GM12878 (cell line): ENCODE measurements at regions of chr17 and their contacts with region 1.

Region 1: DNA sequence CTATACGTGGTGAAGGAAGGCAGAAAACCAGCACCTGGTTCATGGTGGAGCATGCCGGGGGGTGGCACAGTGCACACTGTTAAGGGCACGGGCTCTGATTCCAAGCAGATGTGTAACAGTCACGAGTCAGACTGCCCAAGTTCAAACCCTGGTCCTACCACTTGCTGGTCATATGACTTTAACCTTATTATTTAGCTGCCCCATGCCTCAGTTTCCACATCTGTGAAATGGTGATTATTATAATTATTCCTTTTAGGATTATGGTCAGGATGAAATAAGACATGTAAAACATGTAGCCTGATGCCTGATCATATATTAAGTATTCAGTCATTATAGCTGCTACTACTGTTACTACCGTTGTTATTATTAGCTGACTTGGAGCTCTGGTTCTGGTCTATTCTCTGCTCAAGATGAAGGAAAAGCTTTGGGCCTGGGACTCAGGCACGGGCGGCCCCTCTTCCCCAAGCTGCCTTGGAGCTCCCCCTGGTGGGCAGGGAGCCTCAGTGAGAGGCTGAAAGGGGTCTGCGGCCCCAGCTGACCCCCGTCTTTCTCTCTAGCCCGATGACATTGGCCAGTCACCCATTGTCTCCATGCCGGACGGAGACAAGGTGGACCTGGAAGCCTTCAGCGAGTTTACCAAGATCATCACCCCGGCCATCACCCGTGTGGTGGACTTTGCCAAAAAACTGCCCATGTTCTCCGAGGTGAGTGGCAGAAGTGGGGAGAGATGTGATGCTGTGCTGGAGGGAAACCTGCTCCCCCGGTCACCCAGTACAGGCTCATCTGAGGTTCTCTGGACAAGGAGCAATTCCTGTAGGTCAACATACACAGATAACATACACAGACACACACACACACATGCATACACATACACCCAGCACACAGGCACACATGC is 14.0 kb downstream of the NR1D1 start:
- DNase-seq: no peak
- ATAC-seq: peak; percentile 92
- H3K4me3 ChIP-seq: no peak overlapping the region
- H3K27ac ChIP-seq: no peak overlapping the region
- H3K4me1 ChIP-seq: no peaks in the 10 kb centered on the region
- H3K27me3 ChIP-seq: no peaks in the 10 kb centered on the region
- CTCF ChIP-seq: peak; percentile 79 to 89 (median 80)
- EP300 ChIP-seq: no peak
- POLR2A ChIP-seq: no peak
- RAD21 ChIP-seq: peak; percentile 78

Region 2: GRCh38 chr17:40021451-40021971 is 64.9 kb before region 1 on chr17:
- CTCF ChIA-PET with region 1: interaction called, 44 read pairs
- POLR2A ChIA-PET with region 1: no interaction called
- RAD21 ChIA-PET with region 1: no interaction called
- SMC1A ChIA-PET with region 1: interaction called, 4 read pairs
- in situ Hi-C with region 1: no loop called
- intact Hi-C with region 1: no loop called
- DNase-seq: no peak
- ATAC-seq: no peak
- H3K4me3 ChIP-seq: no peak overlapping the region
- H3K27ac ChIP-seq: no peak overlapping the region
- H3K4me1 ChIP-seq: no peaks in the 10 kb centered on the region
- H3K27me3 ChIP-seq: no peaks in the 10 kb centered on the region
- CTCF ChIP-seq: no peak
- EP300 ChIP-seq: no peak
- POLR2A ChIP-seq: no peak
- RAD21 ChIP-seq: no peak

Region 3: DNA sequence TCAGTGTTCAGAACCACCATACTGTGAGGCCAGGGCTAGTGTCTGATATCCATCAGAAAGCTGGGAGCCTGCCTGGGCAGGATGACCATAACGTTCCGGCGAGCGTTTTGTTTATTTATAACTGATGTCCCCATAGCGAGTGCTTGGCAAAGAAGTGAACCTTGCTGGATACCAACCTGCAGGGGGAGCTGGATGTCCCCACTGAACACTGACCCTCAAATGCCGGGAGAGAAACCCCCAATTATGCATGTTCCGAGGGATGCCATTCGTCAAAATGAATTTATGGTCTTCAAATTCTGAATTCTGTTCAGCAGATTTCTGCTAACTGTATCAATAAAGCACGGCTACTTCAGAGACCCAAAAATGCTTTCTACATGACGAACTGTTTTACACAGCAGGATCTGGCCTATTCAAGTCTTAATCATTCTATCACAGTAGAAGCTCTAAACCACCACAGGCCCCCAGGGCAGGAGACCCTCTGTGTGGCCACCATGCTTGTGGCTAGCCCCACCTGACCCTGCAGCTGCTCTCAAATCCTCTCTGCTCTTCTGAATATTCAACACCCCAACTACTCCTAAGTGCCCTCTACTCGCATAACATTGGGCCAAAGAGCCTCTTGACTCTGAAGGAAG is 47.4 kb before region 1 on chr17:
- CTCF ChIA-PET with region 1: interaction called, 18 read pairs
- POLR2A ChIA-PET with region 1: no interaction called
- RAD21 ChIA-PET with region 1: interaction called, 3 read pairs
- SMC1A ChIA-PET with region 1: interaction called, 7 read pairs
- in situ Hi-C with region 1: no loop called
- intact Hi-C with region 1: no loop called
- DNase-seq: no peak
- ATAC-seq: no peak
- H3K4me3 ChIP-seq: no peak overlapping the region
- H3K27ac ChIP-seq: no peak overlapping the region
- H3K4me1 ChIP-seq: no peaks in the 10 kb centered on the region
- H3K27me3 ChIP-seq: no peaks in the 10 kb centered on the region
- CTCF ChIP-seq: peak; percentile 18 to 35 (median 27); a peak in 3 of 6 replicates
- EP300 ChIP-seq: no peak
- POLR2A ChIP-seq: no peak
- RAD21 ChIP-seq: 0 out of 2 replicates have a peak, but pooled peaks have one; percentile 21

Region 4: DNA sequence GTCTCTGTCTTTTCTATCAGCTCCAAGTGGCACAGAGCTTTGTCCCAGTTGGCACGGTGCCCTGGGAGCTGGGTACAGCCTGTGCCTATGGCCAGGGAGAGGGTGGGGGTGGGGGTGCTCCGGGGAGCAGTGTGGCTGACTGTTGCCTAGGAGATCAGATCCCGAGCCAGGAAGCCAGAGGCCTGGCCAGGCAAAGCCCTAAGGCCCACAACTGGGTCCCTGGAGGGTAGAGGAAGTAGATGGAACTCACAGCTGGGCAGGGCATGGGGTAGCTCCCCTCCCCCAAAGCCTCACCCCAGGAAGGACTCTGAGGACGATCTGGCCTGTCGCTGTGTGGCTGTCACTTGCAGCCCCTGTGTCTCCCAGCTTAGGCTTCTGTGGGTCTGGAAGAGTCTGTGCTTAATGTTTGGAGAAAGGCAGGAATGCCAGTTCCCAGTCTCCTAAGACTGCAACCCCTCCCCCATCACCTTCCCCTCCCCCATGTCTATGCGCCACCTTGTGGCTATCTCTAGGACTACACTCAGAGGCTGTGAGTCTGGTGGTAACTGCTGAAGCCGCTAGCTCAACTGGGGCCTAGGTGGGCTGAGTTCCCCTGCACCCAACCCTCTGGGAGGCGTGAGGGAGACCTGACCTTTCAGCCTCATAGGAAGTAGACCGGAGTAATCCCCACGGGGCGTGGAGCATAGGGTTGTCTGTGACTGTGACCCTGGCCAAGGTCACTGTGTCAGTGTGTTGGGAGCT is 11.0 kb before region 1 on chr17:
- CTCF ChIA-PET with region 1: interaction called, 75 read pairs
- POLR2A ChIA-PET with region 1: interaction called, 6 read pairs
- RAD21 ChIA-PET with region 1: interaction called, 4 read pairs
- SMC1A ChIA-PET with region 1: interaction called, 12 read pairs
- in situ Hi-C with region 1: no loop called
- intact Hi-C with region 1: no loop called
- DNase-seq: no peak
- ATAC-seq: peak; percentile 89
- H3K4me3 ChIP-seq: no peak overlapping the region
- H3K27ac ChIP-seq: no peak overlapping the region
- H3K4me1 ChIP-seq: peaks cover 6% of the 10 kb centered on the region
- H3K27me3 ChIP-seq: no peaks in the 10 kb centered on the region
- CTCF ChIP-seq: peak; percentile 72 to 91 (median 81)
- EP300 ChIP-seq: no peak
- POLR2A ChIP-seq: no peak
- RAD21 ChIP-seq: peak; percentile 57

Region 5: GRCh38 chr17:40168262-40168832 is 82.0 kb after region 1 on chr17:
- CTCF ChIA-PET with region 1: interaction called, 13 read pairs
- POLR2A ChIA-PET with region 1: no interaction called
- RAD21 ChIA-PET with region 1: interaction called, 6 read pairs
- SMC1A ChIA-PET with region 1: interaction called, 3 read pairs
- in situ Hi-C with region 1: no loop called
- intact Hi-C with region 1: no loop called
- DNase-seq: peak; percentile 15
- ATAC-seq: peak; percentile 83
- H3K4me3 ChIP-seq: no peak overlapping the region
- H3K27ac ChIP-seq: no peak overlapping the region
- H3K4me1 ChIP-seq: no peaks in the 10 kb centered on the region
- H3K27me3 ChIP-seq: no peaks in the 10 kb centered on the region
- CTCF ChIP-seq: peak; percentile 69 to 78 (median 69)
- EP300 ChIP-seq: no peak
- POLR2A ChIP-seq: no peak
- RAD21 ChIP-seq: peak; percentile 80